Psoas muscle (tissue), 8 donors: ENCODE measurements at regions of chr3 and their contacts with region 1.

Region 1: DNA sequence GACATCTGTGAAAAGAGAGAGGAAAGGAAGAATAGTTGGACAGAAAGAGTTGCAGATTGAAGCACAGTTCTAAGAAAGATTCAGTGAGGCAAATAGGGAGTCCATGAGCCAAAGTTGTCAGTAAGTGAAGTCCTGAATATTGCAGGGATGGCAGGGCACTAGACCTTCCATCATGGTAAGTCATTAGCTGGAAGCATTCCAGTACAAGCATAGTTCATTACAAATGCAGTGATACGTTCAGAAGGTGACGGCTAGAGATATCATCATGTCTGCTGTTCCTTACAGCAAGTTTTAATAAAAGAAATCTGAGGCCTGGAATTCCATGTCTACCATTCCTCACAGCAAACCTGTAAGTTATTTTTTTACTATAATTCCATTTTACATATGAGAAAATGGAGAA is 720.1 kb downstream of the GBE1 start:
- DNase-seq: no peak
- ATAC-seq: no peak
- H3K4me3 ChIP-seq: no peak overlapping the region
- H3K27ac ChIP-seq: no peak overlapping the region
- H3K4me1 ChIP-seq: no peaks in the 10 kb centered on the region
- H3K27me3 ChIP-seq: no peaks in the 10 kb centered on the region
- CTCF ChIP-seq: no peak

Region 2: DNA sequence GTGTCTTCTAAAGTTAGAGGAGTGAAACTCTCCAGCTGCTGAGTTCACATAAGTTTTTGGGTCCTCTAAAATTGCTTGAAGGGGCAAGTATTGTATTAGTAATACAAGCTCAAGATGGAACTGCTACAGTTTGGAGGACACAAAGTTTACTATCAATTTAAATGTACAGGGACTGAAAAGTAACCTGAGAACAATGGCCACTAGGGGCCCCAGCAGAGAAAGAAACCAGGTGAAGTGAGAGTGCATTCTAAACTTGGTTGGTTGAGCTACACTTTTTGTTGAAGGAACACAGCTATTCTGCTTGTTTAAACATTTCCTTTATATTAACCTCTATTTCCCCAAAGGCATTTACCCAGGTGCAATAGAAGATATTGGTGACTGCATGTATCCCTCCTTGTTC is 35.3 kb before region 1 on chr3:
- intact Hi-C with region 1: no loop called
- DNase-seq: no peak
- ATAC-seq: no peak
- H3K4me3 ChIP-seq: no peak overlapping the region
- H3K27ac ChIP-seq: no peak overlapping the region
- H3K4me1 ChIP-seq: no peaks in the 10 kb centered on the region
- H3K27me3 ChIP-seq: no peaks in the 10 kb centered on the region
- CTCF ChIP-seq: no peak

Region 3: GRCh38 chr3:81063896-81064295 is 22.6 kb after region 1 on chr3:
- intact Hi-C with region 1: loop called in 1 of 2 experiments (anchors 2 kb)
- DNase-seq: no peak
- ATAC-seq: no peak
- H3K4me3 ChIP-seq: no peak overlapping the region
- H3K27ac ChIP-seq: no peak overlapping the region
- H3K4me1 ChIP-seq: no peaks in the 10 kb centered on the region
- H3K27me3 ChIP-seq: no peaks in the 10 kb centered on the region
- CTCF ChIP-seq: no peak